Dendritic cell treated with granulocyte-macrophage colony-stimulating factor and Interleukin-4, amounts not matched to agents 40 ng/mL and 50 ng/mL, for 4 days (primary cell): ENCODE measurements at regions of chr1 and their contacts with region 1.

Region 1: GRCh38 chr1:62783723-62784508 is at the start of gene ATG4C:
- H3K4me3 Mint-ChIP-seq: no peak within 1 kb of the TSS
- H3K27ac Mint-ChIP-seq: no peak within 1 kb of the TSS
- H3K4me1 Mint-ChIP-seq: peaks cover 25% of the 10 kb centered on the region
- H3K27me3 Mint-ChIP-seq: no peaks in the 10 kb centered on the region

Region 2: GRCh38 chr1:62436466-62437256 is 347.3 kb before region 1 on chr1 and contains the start of gene USP1:
- intact Hi-C with region 1: loop called (anchors 2 kb)
- H3K4me3 Mint-ChIP-seq: peak within 1 kb of the TSS; percentile 94
- H3K27ac Mint-ChIP-seq: peak within 1 kb of the TSS; percentile 99
- H3K4me1 Mint-ChIP-seq: peaks cover 35% of the 10 kb centered on the region
- H3K27me3 Mint-ChIP-seq: no peaks in the 10 kb centered on the region

Region 3: DNA sequence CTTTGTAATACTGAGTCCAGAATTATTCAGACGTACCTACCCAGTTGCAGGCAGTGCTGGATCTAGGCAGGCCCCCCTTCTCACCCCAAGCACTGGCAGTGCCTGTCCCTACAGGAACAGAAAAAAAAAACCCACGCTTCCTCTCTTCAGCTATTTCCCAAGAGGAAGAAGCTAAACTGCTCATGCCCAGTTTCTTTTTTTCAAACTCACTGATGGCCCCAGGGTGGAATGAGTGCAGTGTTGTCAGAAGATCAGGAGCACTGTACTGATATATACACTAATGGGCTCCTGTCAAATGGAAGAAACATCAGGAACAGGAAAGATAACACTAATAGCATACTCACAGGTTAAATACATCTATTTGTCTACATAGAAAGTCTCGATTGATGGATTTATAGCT is 67.5 kb before region 1 on chr1:
- intact Hi-C with region 1: no loop called
- H3K4me3 Mint-ChIP-seq: no peak overlapping the region
- H3K27ac Mint-ChIP-seq: peak overlapping the region; percentile 37
- H3K4me1 Mint-ChIP-seq: peaks cover 14% of the 10 kb centered on the region
- H3K27me3 Mint-ChIP-seq: no peaks in the 10 kb centered on the region

Region 4: GRCh38 chr1:62800825-62801306 is 16.9 kb after region 1 on chr1:
- intact Hi-C with region 1: loop called (anchors 2 kb)
- H3K4me3 Mint-ChIP-seq: peak overlapping the region; percentile 34
- H3K27ac Mint-ChIP-seq: peak overlapping the region; percentile 90
- H3K4me1 Mint-ChIP-seq: peaks cover 32% of the 10 kb centered on the region
- H3K27me3 Mint-ChIP-seq: no peaks in the 10 kb centered on the region